ENCODE measurements at regions of chr17 and their contacts with region 1.

Region 1: GRCh38 chr17:48753794-48754499 is 25.4 kb upstream of the HOXB13 start:
- DNase-seq: no peak
- H3K4me3 Mint-ChIP-seq: no peak overlapping the region
- H3K27ac Mint-ChIP-seq: peak overlapping the region; percentile 25
- H3K4me1 Mint-ChIP-seq: peaks cover 5% of the 10 kb centered on the region
- H3K27me3 Mint-ChIP-seq: peaks cover 85% of the 10 kb centered on the region

Region 2: DNA sequence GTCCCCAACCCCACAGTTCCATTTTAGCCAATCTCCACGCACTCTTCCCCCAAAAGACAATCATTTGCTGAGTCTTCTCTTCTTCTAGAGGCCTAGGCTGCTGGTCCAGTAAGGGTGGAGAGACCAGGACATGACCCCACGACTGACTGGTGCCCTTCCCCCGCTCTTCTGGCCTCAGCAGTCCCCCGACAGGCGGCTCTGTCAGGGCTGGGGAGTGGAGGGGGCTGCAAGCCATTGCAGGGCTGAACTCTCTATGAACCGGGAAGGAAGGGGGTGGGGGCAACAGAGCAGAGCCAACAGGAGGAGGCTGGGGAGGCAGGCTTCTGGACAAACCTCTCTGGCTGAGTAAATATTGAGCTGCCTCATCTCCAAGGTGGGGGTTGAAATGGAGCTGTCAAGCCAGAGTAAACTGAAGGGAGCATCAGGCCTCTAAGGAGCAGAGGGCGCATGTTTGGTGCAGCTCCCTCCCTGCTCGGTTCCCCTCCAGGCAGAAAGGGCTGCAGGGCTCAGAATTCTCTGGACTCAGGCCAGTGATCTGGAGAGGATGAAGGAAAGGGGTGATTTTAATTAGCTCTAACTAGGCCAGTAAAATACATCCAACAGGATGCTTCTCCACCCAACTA is 231.8 kb before region 1 on chr17:
- intact Hi-C with region 1: no loop called
- DNase-seq: no peak
- H3K4me3 Mint-ChIP-seq: no peak overlapping the region
- H3K27ac Mint-ChIP-seq: no peak overlapping the region
- H3K4me1 Mint-ChIP-seq: peaks cover 19% of the 10 kb centered on the region
- H3K27me3 Mint-ChIP-seq: peaks cover 47% of the 10 kb centered on the region

Region 3: GRCh38 chr17:48610282-48611211 is 143.4 kb before region 1 on chr17 and contains the start of gene HOXB7:
- intact Hi-C with region 1: loop called (anchors 2 kb)
- DNase-seq: peak; percentile 90
- H3K4me3 Mint-ChIP-seq: peak within 1 kb of the TSS; percentile 89
- H3K27ac Mint-ChIP-seq: peak within 1 kb of the TSS; percentile 56
- H3K4me1 Mint-ChIP-seq: peaks cover 32% of the 10 kb centered on the region
- H3K27me3 Mint-ChIP-seq: peaks cover 76% of the 10 kb centered on the region
- total RNA-seq, gene HOXB7: 0.30 and 0.36 TPM in 2 replicates

Region 4: GRCh38 chr17:48718227-48718760 is 35.7 kb before region 1 on chr17:
- intact Hi-C with region 1: no loop called
- DNase-seq: peak; percentile 65
- H3K4me3 Mint-ChIP-seq: no peak overlapping the region
- H3K27ac Mint-ChIP-seq: peak overlapping the region; percentile 21
- H3K4me1 Mint-ChIP-seq: peaks cover 11% of the 10 kb centered on the region
- H3K27me3 Mint-ChIP-seq: peaks cover 81% of the 10 kb centered on the region

Region 5: DNA sequence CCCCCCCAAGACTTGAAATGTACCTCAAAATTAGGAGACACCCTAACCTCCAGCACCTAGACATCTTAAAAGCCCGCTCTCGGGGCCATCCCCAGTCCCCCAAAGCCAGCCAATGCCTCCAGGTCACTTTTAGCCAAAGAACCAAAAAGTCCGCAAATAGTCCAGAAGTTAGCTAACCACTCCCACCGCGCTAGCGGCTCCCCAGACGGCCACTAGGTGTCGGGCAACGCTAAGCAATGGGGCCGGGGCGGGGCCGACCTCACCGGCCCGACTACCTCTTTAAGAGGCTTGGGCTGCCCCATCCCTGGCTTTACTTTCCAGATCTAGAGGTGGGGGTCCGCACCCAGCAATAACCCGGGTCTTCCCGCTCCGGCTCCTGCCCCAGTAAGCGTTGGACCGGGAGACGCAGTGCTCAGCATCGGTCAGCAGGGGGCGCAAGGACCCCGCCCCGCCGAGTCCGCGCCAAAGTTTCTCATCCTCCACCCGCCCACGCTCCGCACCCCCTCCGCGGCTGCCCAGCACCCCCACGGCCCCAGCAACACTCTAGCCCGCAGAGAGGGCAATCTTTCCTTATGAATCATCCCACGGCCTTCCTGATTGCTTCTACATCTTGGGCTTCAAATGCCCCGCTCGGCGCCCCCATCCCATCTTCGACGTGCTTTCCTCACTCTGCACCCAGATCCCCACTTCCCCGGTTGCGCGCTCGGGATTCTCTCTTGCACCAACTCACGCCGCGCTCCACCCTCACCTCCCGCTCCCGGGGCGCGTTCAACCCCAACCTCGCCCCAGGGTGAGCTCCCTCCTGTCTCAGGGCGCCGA is 1446.7 kb after region 1 on chr17:
- intact Hi-C with region 1: no loop called
- DNase-seq: peak; percentile 95
- H3K4me3 Mint-ChIP-seq: peak overlapping the region; percentile 80
- H3K27ac Mint-ChIP-seq: peak overlapping the region; percentile 4
- H3K4me1 Mint-ChIP-seq: peaks cover 13% of the 10 kb centered on the region
- H3K27me3 Mint-ChIP-seq: peaks cover 58% of the 10 kb centered on the region

Measured in activated CD4-positive, alpha-beta T cell treated with anti-CD3 and anti-CD28 coated beads, Interleukin-2, amount 10 ng/mL, durations not matched to agents 24 days and 14 days (primary cell).